ENCODE measurements at regions of chr19 and their contacts with region 1.

Region 1: DNA sequence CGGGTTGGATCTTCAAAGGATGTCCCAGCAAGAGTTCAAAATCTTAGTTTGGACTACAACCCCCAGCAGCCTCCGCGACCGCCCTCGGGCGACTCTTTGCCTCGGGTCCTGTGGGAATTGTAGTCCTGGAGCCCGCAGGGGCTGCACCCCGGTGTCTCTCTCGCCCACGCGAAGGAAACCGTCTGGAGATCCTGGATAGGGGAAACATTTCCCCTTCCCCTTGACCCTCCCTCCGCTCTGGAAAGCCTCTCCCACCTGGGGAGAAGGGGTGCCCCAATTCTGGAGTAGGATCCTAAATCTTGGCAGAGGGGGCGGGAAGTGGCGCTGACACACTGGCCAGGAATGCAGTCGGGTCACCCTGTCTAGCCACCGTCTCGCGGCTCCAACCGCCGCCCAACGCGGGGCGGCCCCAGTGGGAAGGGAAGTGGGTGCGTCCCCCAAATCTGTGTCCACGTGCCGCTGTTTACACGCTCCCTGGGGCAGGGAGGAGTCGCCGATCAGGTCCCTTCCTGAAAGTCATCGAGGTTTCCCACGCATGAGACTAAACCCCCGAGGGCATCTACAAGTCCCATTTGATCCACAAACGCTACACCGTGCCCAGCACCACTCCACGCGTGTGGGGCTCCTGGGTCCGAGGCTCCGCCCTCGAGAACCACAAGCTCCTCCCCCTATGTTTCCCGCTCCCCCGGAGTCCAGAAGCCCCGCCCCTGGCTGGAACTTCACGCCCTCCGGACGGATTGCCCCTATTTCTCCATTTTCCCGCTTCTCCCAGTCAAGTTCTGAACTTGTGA is 761 bp upstream of the PPP1R13L start:
- DNase-seq: peak; percentile 96
- H3K4me3 Mint-ChIP-seq: peak overlapping the region; percentile 96
- H3K27ac Mint-ChIP-seq: peak overlapping the region; percentile 96
- H3K4me1 Mint-ChIP-seq: peaks cover 25% of the 10 kb centered on the region
- H3K27me3 Mint-ChIP-seq: no peaks in the 10 kb centered on the region
- CTCF ChIP-seq: no peak

Region 2: DNA sequence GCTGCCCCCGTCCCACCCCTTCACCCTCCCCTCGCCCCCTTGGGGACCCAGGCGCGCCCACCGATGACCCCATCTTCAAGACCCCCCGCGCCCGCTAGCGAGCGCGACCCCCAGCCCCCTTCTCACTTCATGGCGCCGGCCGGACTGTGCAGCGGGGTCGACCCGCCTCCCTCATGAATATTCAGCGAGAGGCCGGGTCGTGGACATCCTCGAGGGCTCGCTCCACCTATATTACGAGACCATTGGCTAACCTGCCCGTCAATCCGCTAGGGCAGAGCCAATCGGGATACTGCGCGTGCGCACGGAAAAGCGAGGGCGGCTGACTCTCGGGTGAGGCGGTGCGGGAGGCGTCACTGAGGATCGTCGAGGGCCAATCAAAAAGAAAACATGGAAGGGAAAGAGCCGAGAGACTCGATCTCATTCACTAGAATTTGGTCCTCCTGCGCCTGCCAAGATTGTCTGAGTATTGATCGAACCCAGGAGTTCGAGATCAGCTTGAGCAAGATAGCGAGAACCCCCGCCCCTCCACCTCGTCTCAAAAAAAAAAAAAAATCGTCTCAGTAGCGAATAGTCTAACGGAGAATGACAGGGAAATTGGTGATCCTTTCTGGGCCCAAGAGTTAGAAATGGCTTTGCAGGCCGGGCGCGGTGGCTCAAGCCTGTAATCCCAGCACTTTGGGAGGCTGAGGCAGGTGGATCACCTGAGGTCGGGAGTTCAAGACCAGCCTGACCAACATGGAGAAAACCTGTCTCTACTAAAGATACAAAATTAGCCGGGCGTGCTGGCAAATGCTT is 35.0 kb before region 1 on chr19 and contains the start of gene ERCC2:
- CTCF ChIA-PET with region 1: interaction called, 5 read pairs
- POLR2A ChIA-PET with region 1: interaction called, 10 read pairs
- intact Hi-C with region 1: no loop called
- DNase-seq: peak; percentile 99
- H3K4me3 Mint-ChIP-seq: peak within 1 kb of the TSS; percentile 81
- H3K27ac Mint-ChIP-seq: peak within 1 kb of the TSS; percentile 94
- H3K4me1 Mint-ChIP-seq: peaks cover 4% of the 10 kb centered on the region
- H3K27me3 Mint-ChIP-seq: no peaks in the 10 kb centered on the region
- CTCF ChIP-seq: no peak
- total RNA-seq, gene ERCC2: 19.2 and 27.8 TPM in 2 replicates

Region 3: GRCh38 chr19:45391340-45391739 is 14.3 kb before region 1 on chr19:
- CTCF ChIA-PET with region 1: interaction called, 5 read pairs
- POLR2A ChIA-PET with region 1: interaction called, 14 read pairs
- intact Hi-C with region 1: no loop called
- DNase-seq: no peak
- H3K4me3 Mint-ChIP-seq: no peak overlapping the region
- H3K27ac Mint-ChIP-seq: no peak overlapping the region
- H3K4me1 Mint-ChIP-seq: no peaks in the 10 kb centered on the region
- H3K27me3 Mint-ChIP-seq: no peaks in the 10 kb centered on the region
- CTCF ChIP-seq: no peak

Region 4: DNA sequence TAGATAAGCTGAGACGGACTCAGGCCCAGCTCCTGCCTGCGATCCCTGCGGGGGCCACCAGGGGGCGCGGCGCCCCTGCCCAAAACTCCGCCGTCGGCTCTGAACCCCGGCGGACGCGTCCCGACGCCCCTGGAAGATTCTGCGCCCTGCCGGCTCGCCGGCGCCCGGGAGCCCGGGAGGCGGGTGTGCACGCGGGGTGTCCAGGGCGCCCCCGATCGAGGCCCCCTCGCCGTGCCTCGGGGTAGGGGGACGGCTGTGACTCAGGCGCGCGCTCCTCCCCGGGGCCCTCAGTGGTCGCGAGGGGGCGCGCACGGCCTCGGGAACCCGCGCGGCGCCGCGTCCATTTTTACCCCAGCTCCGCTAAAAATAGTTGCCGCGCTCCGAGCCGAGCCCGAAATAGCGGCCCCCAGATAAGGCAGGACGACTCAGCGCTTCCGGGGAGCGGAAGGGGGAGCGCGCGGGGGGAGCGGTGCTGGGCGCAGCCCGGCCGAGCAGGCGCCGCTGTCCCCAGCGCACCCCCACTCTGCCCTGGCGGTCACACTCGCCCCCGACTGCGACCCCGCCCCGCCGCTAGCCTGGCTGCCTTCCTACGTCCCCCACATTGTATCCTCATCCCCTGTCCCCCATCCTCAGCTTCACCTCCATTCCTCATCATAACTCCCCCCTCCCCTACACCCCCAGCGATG is 34.1 kb after region 1 on chr19:
- CTCF ChIA-PET with region 1: interaction called, 12 read pairs
- POLR2A ChIA-PET with region 1: interaction called, 29 read pairs
- intact Hi-C with region 1: no loop called
- DNase-seq: peak; percentile 73
- H3K4me3 Mint-ChIP-seq: peak overlapping the region; percentile 64
- H3K27ac Mint-ChIP-seq: no peak overlapping the region
- H3K4me1 Mint-ChIP-seq: peaks cover 17% of the 10 kb centered on the region
- H3K27me3 Mint-ChIP-seq: no peaks in the 10 kb centered on the region
- CTCF ChIP-seq: peak; percentile 98

Region 5: GRCh38 chr19:45478454-45479238 is 73.0 kb after region 1 on chr19:
- CTCF ChIA-PET with region 1: interaction called, 7 read pairs
- POLR2A ChIA-PET with region 1: interaction called, 46 read pairs
- intact Hi-C with region 1: loop called (anchors 1 kb)
- DNase-seq: peak; percentile 95
- H3K4me3 Mint-ChIP-seq: peak overlapping the region; percentile 76
- H3K27ac Mint-ChIP-seq: peak overlapping the region; percentile 99
- H3K4me1 Mint-ChIP-seq: peaks cover 14% of the 10 kb centered on the region
- H3K27me3 Mint-ChIP-seq: no peaks in the 10 kb centered on the region
- CTCF ChIP-seq: peak; percentile 97

Measured in MCF 10A (cell line).